Activated CD4-positive, alpha-beta T cell treated with anti-CD3 and anti-CD28 coated beads, Interleukin-2, amount 10 ng/mL, durations not matched to agents 24 days and 14 days (primary cell): ENCODE measurements at regions of chr15 and their contacts with region 1.

Region 1: GRCh38 chr15:84981054-84981710 is 474 bp upstream of the PDE8A start:
- DNase-seq: peak; percentile 99
- H3K4me3 Mint-ChIP-seq: peak overlapping the region; percentile 88
- H3K27ac Mint-ChIP-seq: peak overlapping the region; percentile 96
- H3K4me1 Mint-ChIP-seq: peaks cover 39% of the 10 kb centered on the region
- H3K27me3 Mint-ChIP-seq: peaks cover 12% of the 10 kb centered on the region

Region 2: DNA sequence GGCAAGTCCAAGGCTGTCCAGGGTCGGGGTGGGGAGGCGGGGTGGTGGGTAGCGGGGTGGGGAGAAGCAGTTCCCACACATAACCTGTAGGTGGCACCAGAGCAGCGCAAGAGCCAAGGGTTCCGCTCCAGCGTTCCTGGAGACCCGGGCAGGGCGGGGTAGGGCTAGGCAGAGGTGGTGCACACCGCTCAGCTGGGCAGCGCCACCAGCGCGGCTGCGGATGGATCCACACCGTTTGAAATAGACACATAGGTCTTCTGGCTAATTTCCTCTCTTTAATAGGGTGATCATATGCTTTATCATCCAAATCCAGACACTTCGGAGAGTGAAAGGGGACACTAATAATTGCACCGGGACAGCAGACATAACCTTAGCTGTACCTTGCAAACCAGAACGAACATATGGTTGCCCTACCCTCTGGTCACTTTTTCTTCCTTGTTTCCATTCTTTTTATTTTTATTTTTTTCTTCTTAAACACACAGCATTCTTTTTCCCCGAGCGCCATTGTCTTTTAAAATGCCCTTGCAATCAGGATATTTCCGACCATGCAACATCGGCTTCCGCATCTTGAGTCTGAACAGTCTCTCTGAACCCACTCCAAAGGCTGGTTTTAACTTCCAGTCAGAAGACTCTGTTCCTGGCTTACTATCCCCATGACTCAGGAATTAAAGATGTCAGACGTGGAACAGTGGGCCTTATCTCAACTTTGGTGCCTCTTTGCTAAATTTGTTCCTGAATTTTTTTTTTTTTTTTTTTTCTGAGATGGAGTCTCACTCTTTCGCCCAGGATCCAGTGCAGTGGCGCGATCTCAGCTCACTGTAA is 392.9 kb before region 1 on chr15:
- intact Hi-C with region 1: loop called (anchors 5 kb)
- DNase-seq: peak; percentile 95
- H3K4me3 Mint-ChIP-seq: peak overlapping the region; percentile 75
- H3K27ac Mint-ChIP-seq: no peak overlapping the region
- H3K4me1 Mint-ChIP-seq: peaks cover 3% of the 10 kb centered on the region
- H3K27me3 Mint-ChIP-seq: peaks cover 19% of the 10 kb centered on the region

Region 3: DNA sequence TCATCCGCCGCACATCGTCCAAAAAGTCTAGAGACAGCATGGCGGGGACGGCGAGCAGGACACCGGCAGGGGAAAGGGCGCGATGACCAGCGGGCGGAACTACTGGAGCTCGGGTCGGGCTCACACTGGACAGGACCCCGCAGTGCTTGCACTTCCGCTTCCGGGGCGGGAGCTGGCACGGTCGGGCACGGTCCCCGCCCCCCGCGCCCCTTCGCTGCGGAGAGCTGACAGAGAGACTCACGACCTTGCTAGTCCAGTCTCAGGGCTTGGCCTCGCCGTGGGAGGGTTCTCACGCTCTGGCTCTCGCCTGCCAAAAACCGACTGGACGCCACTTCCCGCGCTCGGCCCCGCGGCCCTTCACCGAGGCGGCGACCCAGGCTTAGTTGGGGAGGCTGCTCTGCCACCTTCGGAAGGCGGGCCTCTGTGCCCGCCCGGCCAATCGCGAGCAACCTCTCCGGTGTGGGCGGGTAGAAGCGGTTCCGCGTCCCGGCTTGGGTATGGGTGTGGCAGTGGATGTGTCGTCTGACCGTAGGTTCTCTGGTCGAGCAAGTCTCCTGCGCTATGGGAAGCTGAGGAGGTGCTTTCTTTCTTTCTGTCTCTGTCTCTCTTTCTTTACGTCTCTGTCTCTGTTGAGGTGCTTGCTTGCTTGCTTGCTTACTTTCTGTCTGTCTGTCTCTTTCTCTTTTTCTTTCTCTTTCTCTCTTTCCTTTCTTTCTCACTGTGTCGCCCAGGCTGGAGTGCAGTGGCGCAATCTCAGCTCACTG is 265.0 kb before region 1 on chr15 and contains the start of gene SEC11A:
- intact Hi-C with region 1: loop called (anchors 10 kb)
- DNase-seq: peak; percentile 97
- H3K4me3 Mint-ChIP-seq: peak within 1 kb of the TSS; percentile 89
- H3K27ac Mint-ChIP-seq: peak within 1 kb of the TSS; percentile 91
- H3K4me1 Mint-ChIP-seq: peaks cover 42% of the 10 kb centered on the region
- H3K27me3 Mint-ChIP-seq: no peaks in the 10 kb centered on the region
- total RNA-seq, gene SEC11A: 101 and 108 TPM in 2 replicates

Region 4: GRCh38 chr15:84929744-84930371 is 51.3 kb before region 1 on chr15:
- intact Hi-C with region 1: loop called (anchors 5 kb)
- DNase-seq: no peak
- H3K4me3 Mint-ChIP-seq: no peak overlapping the region
- H3K27ac Mint-ChIP-seq: no peak overlapping the region
- H3K4me1 Mint-ChIP-seq: peaks cover 5% of the 10 kb centered on the region
- H3K27me3 Mint-ChIP-seq: peaks cover 3% of the 10 kb centered on the region

Region 5: DNA sequence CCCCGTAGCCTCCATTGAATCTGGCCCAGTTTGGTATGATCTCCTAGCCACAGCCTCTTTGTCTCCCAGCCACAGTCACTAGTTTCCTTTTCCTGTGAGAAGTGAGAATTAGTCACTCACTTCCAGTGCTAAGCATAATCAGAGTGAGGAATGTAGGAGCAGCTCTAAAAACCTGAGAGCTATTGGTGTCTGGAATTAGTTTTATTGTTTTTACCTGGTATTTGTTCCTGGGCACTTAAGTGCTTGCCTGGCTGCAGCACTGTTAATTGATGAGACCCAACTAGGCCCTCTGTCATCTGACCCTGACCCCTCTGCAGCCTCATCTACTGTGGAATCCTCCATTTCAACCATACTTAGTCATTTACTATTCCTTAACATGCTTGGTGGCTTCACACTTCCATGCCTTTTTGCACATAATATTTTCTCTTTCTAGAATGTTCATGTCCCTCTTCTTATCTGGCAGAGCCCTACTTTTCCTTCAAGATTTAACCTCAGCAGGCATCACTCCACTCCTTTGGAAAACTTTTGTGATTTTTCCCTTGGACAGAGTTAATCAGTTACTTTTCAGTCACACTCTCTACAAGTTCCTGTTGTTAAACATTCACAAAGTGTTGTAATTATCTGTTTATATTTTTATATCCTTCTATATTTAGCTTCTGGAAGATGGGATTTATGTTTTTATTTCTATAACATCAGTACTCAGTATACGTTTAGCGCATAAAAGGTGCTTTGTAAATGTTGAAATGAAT is 49.3 kb after region 1 on chr15:
- intact Hi-C with region 1: loop called (anchors 5 kb)
- DNase-seq: peak; percentile 63
- H3K4me3 Mint-ChIP-seq: no peak overlapping the region
- H3K27ac Mint-ChIP-seq: peak overlapping the region; percentile 10
- H3K4me1 Mint-ChIP-seq: peaks cover 30% of the 10 kb centered on the region
- H3K27me3 Mint-ChIP-seq: no peaks in the 10 kb centered on the region

Region 6: GRCh38 chr15:85794603-85795336 is 813.6 kb after region 1 on chr15 and contains the start of gene KLHL25:
- intact Hi-C with region 1: loop called (anchors 5 kb)
- DNase-seq: peak; percentile 98
- H3K4me3 Mint-ChIP-seq: peak within 1 kb of the TSS; percentile 89
- H3K27ac Mint-ChIP-seq: peak within 1 kb of the TSS; percentile 89
- H3K4me1 Mint-ChIP-seq: peaks cover 30% of the 10 kb centered on the region
- H3K27me3 Mint-ChIP-seq: no peaks in the 10 kb centered on the region
- total RNA-seq, gene KLHL25: 9.0 and 9.8 TPM in 2 replicates